ENCODE measurements at regions of chr2 and their contacts with region 1.

Region 1: GRCh38 chr2:112749755-112750559 is 14.5 kb downstream of the CKAP2L start:
- DNase-seq: peak; percentile 64 to 87 (median 73)
- H3K4me3 ChIP-seq: no peak overlapping the region
- H3K4me3 Mint-ChIP-seq: peak overlapping the region in 6 of 7 donors; percentile 64 to 79 (median 70)
- H3K27ac ChIP-seq: no peak overlapping the region
- H3K27ac Mint-ChIP-seq: peak overlapping the region in 7 of 8 donors; percentile 64 to 93 (median 70)
- H3K4me1 ChIP-seq: peaks cover 8% of the 10 kb centered on the region
- H3K4me1 Mint-ChIP-seq: peaks cover 12 to 33% (median 23%) of the 10 kb centered on the region in 3 donors
- H3K27me3 ChIP-seq: no peaks in the 10 kb centered on the region
- H3K27me3 Mint-ChIP-seq: no peaks in the 10 kb centered on the region

Region 2: DNA sequence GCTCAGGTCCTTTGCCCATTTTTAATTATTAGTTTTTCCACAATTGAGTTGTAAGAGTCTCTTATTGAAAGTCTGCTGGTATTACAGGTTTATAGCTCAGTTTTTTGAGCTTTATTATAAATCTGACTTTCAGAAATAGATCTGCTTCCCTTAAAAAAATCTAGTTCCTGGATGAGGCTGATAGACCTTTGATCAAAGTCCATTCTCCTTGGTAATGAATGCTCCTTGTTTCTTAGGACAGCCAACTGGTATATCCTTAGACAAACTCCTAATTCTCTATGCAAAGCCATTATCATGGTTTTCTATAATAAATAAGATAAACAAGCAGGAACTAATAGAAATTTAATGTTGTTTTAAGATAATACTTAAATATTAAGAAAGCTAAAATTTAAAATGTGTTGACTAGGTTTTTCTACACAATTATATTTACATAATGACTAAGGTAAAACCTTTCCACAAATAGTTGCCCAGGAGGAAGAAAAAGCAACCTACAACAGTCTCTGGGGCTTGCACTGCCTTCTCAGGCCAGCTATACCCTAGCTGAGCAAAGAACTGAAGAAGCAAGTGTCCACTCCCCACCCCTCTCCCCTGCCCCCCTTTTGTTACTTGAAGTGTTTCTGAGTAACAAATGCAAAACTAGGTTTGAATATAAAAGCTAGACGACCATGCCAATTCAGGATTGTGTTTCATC is 12.3 kb before region 1 on chr2:
- CTCF ChIA-PET with region 1: interaction called, 35 read pairs
- POLR2A ChIA-PET with region 1: interaction called, 3 read pairs
- DNase-seq: no peak
- H3K4me3 ChIP-seq: no peak overlapping the region
- H3K4me3 Mint-ChIP-seq: no peak overlapping the region
- H3K27ac ChIP-seq: no peak overlapping the region
- H3K27ac Mint-ChIP-seq: no peak overlapping the region
- H3K4me1 ChIP-seq: no peaks in the 10 kb centered on the region
- H3K4me1 Mint-ChIP-seq: no peaks in the 10 kb centered on the region
- H3K27me3 ChIP-seq: no peaks in the 10 kb centered on the region
- H3K27me3 Mint-ChIP-seq: peaks cover 0 to 2% of the 10 kb centered on the region in 2 donors

Region 3: DNA sequence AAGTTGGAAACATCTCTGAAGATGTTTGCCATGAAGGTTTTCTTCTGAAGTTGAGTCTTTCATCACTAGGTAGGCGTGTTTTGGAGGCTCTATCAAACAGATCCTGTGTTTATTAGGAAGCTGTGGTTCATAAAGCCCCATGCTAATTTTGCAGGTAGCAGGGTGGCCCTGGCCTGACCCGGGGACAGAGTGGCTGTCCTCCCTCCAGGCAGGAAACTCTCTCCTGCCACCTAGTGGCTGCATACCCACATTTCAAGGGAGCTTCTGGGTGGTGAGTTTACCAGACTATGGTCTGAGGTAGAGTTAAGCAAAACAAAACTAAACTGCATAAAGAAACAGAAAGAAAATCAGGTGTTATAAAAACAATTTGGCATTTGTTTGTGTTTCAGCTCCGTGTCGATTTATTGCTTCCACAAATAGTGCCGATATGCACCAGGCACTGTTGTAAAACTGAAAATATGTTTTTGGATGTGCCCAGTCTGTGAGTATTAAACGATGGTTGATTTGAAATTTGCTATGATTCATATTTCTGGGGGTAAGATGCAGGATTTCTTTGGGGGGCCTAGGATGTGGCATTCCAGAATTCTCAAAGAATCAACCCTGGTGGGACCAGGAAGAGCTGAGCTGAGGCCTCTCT is 135.0 kb after region 1 on chr2:
- CTCF ChIA-PET with region 1: interaction called, 34 read pairs
- POLR2A ChIA-PET with region 1: no interaction called
- DNase-seq: peak; percentile 37 to 75 (median 52)
- H3K4me3 ChIP-seq: no peak overlapping the region
- H3K4me3 Mint-ChIP-seq: peak overlapping the region in 2 of 7 donors; percentile 5 to 20
- H3K27ac ChIP-seq: no peak overlapping the region
- H3K27ac Mint-ChIP-seq: peak overlapping the region in 4 of 8 donors; percentile 36 to 71 (median 50)
- H3K4me1 ChIP-seq: no peaks in the 10 kb centered on the region
- H3K4me1 Mint-ChIP-seq: peaks cover 7 to 16% (median 8%) of the 10 kb centered on the region in 3 donors
- H3K27me3 ChIP-seq: no peaks in the 10 kb centered on the region
- H3K27me3 Mint-ChIP-seq: no peaks in the 10 kb centered on the region

Region 4: GRCh38 chr2:112941753-112942658 is 192.0 kb after region 1 on chr2:
- CTCF ChIA-PET with region 1: interaction called, 42 read pairs
- POLR2A ChIA-PET with region 1: no interaction called
- DNase-seq: peak; percentile 20 to 79 (median 44)
- H3K4me3 ChIP-seq: no peak overlapping the region
- H3K4me3 Mint-ChIP-seq: no peak overlapping the region
- H3K27ac ChIP-seq: no peak overlapping the region
- H3K27ac Mint-ChIP-seq: peak overlapping the region in 1 of 8 donors; percentile 8
- H3K4me1 ChIP-seq: no peaks in the 10 kb centered on the region
- H3K4me1 Mint-ChIP-seq: peaks cover 0 to 14% (median 8%) of the 10 kb centered on the region in 3 donors
- H3K27me3 ChIP-seq: no peaks in the 10 kb centered on the region
- H3K27me3 Mint-ChIP-seq: peaks cover 0 to 3% of the 10 kb centered on the region in 2 donors

Region 5: GRCh38 chr2:112947374-112947773 is 197.4 kb after region 1 on chr2:
- CTCF ChIA-PET with region 1: interaction called, 42 read pairs
- POLR2A ChIA-PET with region 1: no interaction called
- DNase-seq: no peak
- H3K4me3 ChIP-seq: no peak overlapping the region
- H3K4me3 Mint-ChIP-seq: no peak overlapping the region
- H3K27ac ChIP-seq: no peak overlapping the region
- H3K27ac Mint-ChIP-seq: no peak overlapping the region
- H3K4me1 ChIP-seq: no peaks in the 10 kb centered on the region
- H3K4me1 Mint-ChIP-seq: no peaks in the 10 kb centered on the region
- H3K27me3 ChIP-seq: no peaks in the 10 kb centered on the region
- H3K27me3 Mint-ChIP-seq: peaks cover 17 to 34% of the 10 kb centered on the region in 2 donors